Activated T-helper 1 cell treated with anti-CD3 and anti-CD28 coated beads, Interleukin-12 subunit alpha, Interleukin-12 subunit beta, Interleukin-2, Interleukin-4 antibody, amounts not matched to agents 30 ng/mL and 10 ng/mL and 1 ng/mL, durations not matched to agents 14 hours and 24 hours and 36 hours (primary cell): ENCODE measurements at regions of chr1 and their contacts with region 1.

Region 1: GRCh38 chr1:212186427-212187207 is 98.6 kb upstream of the PPP2R5A start:
- DNase-seq: peak; percentile 16
- H3K4me3 Mint-ChIP-seq: peak overlapping the region; percentile 62
- H3K27ac Mint-ChIP-seq: peak overlapping the region; percentile 88
- H3K4me1 Mint-ChIP-seq: peaks cover 55% of the 10 kb centered on the region
- H3K27me3 Mint-ChIP-seq: no peaks in the 10 kb centered on the region

Region 2: GRCh38 chr1:212225871-212226302 is 39.3 kb after region 1 on chr1:
- intact Hi-C with region 1: loop called (anchors 2 kb)
- DNase-seq: no peak
- H3K4me3 Mint-ChIP-seq: peak overlapping the region; percentile 69
- H3K27ac Mint-ChIP-seq: peak overlapping the region; percentile 96
- H3K4me1 Mint-ChIP-seq: peaks cover 50% of the 10 kb centered on the region
- H3K27me3 Mint-ChIP-seq: no peaks in the 10 kb centered on the region

Region 3: DNA sequence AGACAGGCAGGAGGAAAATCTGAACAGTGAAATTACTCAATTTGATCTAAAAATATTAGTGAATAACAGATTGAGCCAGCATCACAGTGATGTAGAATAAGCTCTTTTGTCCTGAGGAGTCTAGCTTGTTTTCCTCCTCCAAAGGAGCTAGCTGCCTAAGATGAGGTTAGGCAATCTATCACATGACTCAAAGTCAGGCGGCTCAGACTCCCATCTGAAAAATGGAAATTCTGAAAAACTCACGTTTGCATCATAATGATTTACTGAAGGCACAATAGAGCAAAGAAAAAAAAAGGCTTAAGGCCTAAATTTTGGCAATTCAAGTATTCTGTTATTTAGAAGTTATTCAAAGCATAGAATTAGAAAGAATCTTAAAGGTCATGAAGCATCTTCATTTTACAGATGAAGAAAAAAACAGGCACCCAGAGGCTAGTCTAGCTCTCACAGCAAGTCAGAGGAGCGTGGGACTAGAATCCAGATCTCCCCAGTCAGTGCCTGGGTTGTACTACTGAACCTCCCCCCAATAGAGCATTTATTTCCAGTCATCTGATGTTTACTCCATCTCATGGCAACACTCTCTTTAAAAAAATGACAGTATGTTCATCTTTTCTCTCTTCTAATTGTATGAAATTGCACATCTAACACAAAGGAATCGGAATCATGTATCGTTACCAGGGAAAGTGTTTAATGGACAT is 359.5 kb after region 1 on chr1:
- intact Hi-C with region 1: no loop called
- DNase-seq: no peak
- H3K4me3 Mint-ChIP-seq: no peak overlapping the region
- H3K27ac Mint-ChIP-seq: no peak overlapping the region
- H3K4me1 Mint-ChIP-seq: no peaks in the 10 kb centered on the region
- H3K27me3 Mint-ChIP-seq: peaks cover 50% of the 10 kb centered on the region